Adrenal gland (tissue), 19 donors: ENCODE measurements at regions of chr17 and their contacts with region 1.

Region 1: DNA sequence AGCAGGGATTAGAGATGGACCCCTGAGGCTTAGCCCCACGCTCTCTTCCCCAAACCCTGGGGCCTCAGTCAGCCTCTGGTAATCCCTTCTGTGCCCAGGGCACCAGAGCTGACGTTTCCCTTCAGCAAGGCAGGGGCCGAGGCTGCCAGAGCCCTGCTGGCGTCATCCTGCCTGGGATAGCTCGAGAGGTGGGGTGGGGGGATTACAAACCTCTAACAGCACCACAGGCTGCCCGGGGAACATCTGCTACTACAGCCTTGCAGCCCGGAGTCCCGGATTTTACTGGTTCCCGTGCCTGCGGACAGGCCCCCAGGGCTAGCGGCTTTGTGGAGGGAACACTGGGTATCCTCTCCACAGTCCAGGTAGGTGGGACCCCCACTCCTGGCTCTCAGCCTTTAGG is at the start of gene AANAT:
- DNase-seq: no peak
- H3K4me3 ChIP-seq: no peak within 1 kb of the TSS
- H3K27ac ChIP-seq: no peak within 1 kb of the TSS
- H3K4me1 ChIP-seq: peaks cover 0 to 3% of the 10 kb centered on the region in 2 donors
- H3K27me3 ChIP-seq: no peaks in the 10 kb centered on the region
- CTCF ChIP-seq: no peak
- POLR2A ChIP-seq: no peak
- total RNA-seq, gene AANAT: not detected

Region 2: DNA sequence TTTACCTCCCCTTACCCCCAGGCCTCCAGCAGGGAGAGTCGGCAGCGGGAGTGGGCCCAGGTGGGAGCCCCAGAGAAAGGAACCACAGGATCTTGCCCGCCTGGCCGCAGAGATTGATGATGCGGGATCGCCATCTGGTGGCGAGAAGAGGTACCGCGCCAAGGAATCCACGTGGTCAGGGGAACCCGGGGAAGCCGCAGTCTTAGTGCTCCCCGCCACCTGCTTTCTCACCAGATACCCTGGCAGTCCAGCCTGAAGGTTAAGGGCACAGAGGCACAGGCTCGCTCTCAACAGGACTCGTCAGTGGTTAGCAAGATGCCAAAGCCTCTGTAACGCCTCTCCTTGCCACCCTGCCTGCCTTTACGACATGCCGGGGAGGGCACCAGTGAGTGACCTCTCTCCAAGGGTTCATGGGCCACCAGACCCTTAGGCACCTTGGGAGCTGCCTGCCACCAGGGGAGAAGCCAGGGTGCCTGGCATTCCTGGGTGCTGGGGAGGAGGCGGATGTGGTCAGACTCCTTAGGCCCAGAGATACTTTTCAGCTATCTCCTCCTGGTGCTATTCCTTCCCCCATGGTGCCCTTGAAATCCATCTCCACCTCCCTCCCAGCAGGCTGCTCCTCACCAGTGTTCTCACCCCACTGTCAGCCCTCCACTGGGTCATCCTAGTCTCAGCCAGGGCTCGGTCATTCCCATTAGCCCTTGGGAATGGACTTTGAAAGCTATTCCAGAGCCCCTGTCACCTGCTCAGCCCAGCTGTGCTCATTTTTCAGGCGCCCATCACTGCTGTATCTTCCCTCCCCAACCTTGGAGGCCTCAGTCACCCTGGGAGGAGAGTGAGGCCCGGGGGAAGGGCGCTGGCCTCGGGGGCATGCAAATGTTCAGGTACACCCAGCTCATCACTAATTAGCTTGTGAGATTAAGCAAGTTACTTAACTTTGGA is 39.3 kb after region 1 on chr17:
- intact Hi-C with region 1: loop called (anchors 1 to 5 kb)
- DNase-seq: peak; percentile 71 to 94 (median 82)
- H3K4me3 ChIP-seq: no peak overlapping the region
- H3K27ac ChIP-seq: no peak overlapping the region
- H3K4me1 ChIP-seq: peaks cover 3 to 10% of the 10 kb centered on the region in 2 donors
- H3K27me3 ChIP-seq: no peaks in the 10 kb centered on the region
- CTCF ChIP-seq: peak; percentile 94 to 98 (median 96)
- POLR2A ChIP-seq: no peak

Region 3: DNA sequence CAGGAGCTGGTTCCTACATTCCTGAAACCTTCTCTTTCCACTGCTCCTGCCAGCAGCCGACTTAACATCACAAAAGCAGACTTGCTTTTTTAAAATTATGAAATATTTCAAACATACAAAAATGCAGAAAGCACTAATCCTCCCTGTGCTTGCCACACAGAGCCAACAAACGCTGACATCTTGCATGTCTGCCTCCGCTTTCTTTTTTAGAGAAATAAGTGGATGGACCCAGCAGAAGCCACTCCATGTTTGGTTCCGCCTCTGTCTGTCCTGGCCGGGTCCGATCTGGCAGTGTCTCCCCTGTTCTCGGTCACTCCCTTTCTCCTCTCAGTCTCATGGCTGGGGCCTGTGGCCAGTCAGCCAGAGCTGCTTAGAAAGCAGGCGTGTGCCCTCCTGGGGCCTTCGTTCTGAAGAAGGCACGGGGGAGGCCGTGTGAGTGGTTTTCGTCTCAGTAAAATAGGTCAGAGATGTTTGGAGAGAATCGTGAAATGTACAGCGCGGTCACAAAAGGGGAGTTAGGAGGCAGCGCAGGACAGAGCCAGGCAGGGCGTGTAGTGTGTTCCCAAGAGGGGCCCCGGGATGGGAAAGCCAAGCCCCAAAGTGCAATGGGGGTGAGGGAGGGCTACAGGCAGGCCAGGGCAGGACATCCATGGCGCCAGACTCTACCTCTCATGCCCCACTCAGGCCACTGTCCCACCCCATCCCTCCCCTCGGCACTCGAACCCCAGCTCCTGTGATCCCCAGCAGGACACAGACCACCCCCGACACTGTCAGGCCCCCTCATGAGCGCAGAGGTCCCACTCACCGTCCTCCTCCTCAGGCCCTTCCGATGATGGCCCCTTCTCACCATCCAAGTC is 220.2 kb after region 1 on chr17:
- intact Hi-C with region 1: no loop called
- DNase-seq: peak in 4 of 7 donors; percentile 48 to 57 (median 52)
- H3K4me3 ChIP-seq: no peak overlapping the region
- H3K27ac ChIP-seq: peak overlapping the region; percentile 37 to 95 (median 89)
- H3K4me1 ChIP-seq: peaks cover 21 to 72% of the 10 kb centered on the region in 2 donors
- H3K27me3 ChIP-seq: no peaks in the 10 kb centered on the region
- CTCF ChIP-seq: no peak
- POLR2A ChIP-seq: peak in 1 of 2 donors; percentile 22